ENCODE measurements at regions of chr13 and their contacts with region 1.

Region 1: GRCh38 chr13:48879432-48879831 is 96.3 kb upstream of the FNDC3A start:
- DNase-seq: no peak
- H3K4me3 Mint-ChIP-seq: peak overlapping the region; percentile 1
- H3K27ac Mint-ChIP-seq: peak overlapping the region; percentile 1
- H3K4me1 Mint-ChIP-seq: peaks cover 52% of the 10 kb centered on the region
- H3K27me3 Mint-ChIP-seq: peaks cover 6% of the 10 kb centered on the region

Region 2: DNA sequence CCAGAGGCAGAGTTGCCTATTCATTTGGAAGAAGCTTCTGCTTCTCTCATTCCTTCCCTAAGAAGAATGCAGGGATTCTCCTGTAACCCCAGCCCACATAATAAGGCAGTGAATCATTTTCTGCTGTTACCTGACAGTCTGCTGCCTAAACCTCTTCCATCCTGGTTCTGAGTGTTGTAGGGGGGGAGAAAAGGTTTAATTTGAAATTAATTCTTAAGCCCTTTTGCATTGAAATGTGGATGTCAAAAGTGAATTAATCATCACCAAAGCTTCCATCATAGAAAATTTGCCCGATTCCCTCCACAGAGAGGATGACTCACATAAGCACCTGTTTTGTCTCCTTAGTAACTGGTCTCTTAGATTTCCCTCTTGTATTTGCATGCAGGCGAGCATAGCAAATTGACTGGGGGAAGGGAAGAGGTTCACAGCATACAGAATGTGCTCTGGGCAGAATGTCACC is 50.4 kb before region 1 on chr13:
- intact Hi-C with region 1: loop called (anchors 1 kb)
- DNase-seq: no peak
- H3K4me3 Mint-ChIP-seq: no peak overlapping the region
- H3K27ac Mint-ChIP-seq: peak overlapping the region; percentile 42
- H3K4me1 Mint-ChIP-seq: peaks cover 46% of the 10 kb centered on the region
- H3K27me3 Mint-ChIP-seq: peaks cover 3% of the 10 kb centered on the region

Region 3: GRCh38 chr13:48853728-48854102 is 25.7 kb before region 1 on chr13:
- intact Hi-C with region 1: loop called (anchors 1 kb)
- DNase-seq: no peak
- H3K4me3 Mint-ChIP-seq: peak overlapping the region; percentile 9
- H3K27ac Mint-ChIP-seq: peak overlapping the region; percentile 78
- H3K4me1 Mint-ChIP-seq: peaks cover 45% of the 10 kb centered on the region
- H3K27me3 Mint-ChIP-seq: peaks cover 4% of the 10 kb centered on the region

Region 4: GRCh38 chr13:48908381-48909055 is 29.1 kb after region 1 on chr13:
- intact Hi-C with region 1: no loop called
- DNase-seq: no peak
- H3K4me3 Mint-ChIP-seq: no peak overlapping the region
- H3K27ac Mint-ChIP-seq: no peak overlapping the region
- H3K4me1 Mint-ChIP-seq: peaks cover 9% of the 10 kb centered on the region
- H3K27me3 Mint-ChIP-seq: peaks cover 4% of the 10 kb centered on the region